ENCODE measurements at regions of chr1 and their contacts with region 1.

Region 1: DNA sequence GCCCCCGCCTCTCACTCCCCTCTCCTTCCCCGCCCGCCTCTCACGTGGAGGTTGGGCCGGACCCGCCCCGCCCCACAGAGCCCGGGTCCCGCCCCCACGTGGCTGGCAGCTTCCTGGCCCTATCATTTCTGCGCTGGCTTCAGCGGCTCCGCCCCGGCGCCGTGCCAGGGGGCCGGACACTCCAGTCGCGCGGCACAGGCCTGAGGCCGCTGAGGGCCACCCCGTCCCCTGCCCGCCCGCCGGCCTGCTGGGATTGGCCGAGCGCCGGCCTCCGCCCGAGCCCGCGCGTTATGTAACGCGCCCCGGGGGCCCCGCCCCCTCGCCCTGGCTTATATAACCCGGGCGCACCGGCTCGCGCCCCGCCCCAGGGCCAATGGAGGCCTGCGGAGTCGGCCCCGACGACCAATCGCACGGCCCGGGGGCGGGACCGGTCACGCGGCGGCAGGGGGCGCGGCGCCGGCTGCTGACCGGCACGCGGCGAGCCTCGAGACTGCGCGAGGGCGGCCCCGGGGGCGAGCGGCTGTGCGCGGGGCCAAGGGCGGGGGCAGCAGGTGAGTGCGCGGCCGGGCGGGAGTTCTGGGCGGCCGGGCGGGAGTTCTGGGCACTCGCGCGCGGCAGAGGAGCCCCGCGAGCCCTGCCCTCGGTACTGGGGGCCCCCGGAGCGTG is at the start of gene PER3:
- DNase-seq: peak; percentile 85
- H3K4me3 Mint-ChIP-seq: peak within 1 kb of the TSS; percentile 70
- H3K27ac Mint-ChIP-seq: no peak within 1 kb of the TSS
- H3K4me1 Mint-ChIP-seq: peaks cover 22% of the 10 kb centered on the region
- H3K27me3 Mint-ChIP-seq: no peaks in the 10 kb centered on the region
- total RNA-seq, gene PER3: 2.9 to 3.1 TPM

Region 2: GRCh38 chr1:6544831-6545230 is 1239.1 kb before region 1 on chr1:
- CTCF ChIA-PET with region 1: no interaction called
- intact Hi-C with region 1: no loop called
- DNase-seq: no peak
- H3K4me3 Mint-ChIP-seq: no peak overlapping the region
- H3K27ac Mint-ChIP-seq: peak overlapping the region; percentile 77
- H3K4me1 Mint-ChIP-seq: peaks cover 31% of the 10 kb centered on the region
- H3K27me3 Mint-ChIP-seq: no peaks in the 10 kb centered on the region

Region 3: DNA sequence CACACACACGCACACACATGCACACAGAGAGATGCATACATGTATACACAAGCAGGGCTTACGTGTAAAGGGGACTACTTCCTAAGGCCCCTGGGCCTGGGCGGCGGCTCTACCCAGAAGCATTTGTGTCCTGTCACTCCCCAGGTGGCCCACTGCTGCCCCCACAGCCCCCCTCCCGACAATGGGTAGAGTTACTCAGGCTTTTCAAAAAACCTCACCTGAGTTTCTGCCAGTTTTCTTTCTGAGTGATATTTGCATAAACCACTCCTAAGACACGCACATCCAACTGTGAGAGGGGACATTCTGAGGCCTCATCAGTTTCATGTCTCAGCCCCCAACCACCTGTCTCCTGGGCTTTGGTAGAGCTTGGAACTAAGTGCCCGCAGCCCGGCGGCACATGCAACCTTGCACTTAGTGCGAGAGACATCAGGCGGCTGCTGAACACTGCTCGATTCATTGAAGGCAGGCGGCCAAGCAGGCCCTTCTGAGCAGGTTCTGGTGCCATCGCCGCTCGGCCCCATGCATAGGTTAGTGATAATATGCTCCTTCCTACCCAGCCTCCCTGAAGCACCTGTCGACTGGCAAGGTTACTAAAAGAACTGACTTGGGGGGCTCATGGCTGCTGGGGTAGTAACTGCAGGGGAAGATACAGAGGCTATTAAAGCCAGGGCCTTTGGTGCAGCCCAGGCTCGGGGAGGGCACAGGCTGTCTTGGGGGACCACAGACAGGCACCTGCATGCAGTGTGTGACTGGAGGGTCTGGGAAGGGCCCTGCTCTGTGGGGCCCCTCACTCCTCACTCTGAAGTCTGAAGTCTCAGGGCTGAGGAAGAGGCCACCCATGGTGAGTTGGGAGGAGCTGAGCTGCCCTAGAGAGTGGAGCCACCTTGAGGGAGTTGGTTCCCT is 377.1 kb before region 1 on chr1:
- CTCF ChIA-PET with region 1: no interaction called
- intact Hi-C with region 1: no loop called
- DNase-seq: no peak
- H3K4me3 Mint-ChIP-seq: no peak overlapping the region
- H3K27ac Mint-ChIP-seq: no peak overlapping the region
- H3K4me1 Mint-ChIP-seq: no peaks in the 10 kb centered on the region
- H3K27me3 Mint-ChIP-seq: peaks cover 12% of the 10 kb centered on the region

Region 4: DNA sequence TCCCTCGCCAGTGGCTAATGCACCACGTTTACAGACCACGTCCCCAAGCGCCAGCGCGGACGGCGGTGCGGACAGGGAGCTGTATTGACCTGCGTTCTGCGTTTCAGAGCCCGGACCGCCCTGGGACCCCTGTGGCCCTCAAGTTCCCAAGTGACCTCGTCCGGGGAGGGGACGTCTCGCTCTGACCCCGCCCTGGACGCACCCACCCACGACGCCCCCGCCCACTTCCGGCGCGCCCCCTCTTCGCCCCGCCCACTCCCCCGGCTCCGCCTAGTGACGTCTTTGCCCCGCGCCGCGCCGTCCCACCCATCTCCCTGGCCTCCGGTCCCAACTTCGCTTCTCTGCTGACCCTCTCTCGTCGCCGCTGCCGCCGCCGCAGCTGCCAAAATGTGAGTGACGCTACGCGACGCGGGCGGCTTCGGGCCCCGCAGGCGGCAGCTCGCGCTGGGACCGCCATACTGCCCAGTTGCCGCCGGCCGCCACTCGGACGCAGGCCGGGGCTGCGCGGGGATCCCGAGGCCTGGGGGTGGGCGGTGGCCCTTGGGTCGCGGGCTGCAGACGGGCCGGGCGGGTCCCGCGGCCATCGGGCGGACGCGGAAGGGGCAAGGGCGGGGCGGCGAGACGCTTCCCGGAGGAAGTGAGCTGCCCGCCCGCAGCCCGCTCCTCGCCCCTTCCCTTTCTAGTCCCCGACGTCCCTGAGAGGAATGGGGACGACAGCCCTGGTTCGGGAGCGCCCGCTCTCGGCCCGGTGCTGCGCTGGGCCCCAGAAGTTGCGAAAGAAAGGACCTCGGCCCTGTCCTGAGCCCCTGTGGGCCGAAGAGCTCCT is 12.7 kb before region 1 on chr1 and contains the start of gene VAMP3:
- CTCF ChIA-PET with region 1: no interaction called
- intact Hi-C with region 1: loop called (anchors 1 kb)
- DNase-seq: peak; percentile 89
- H3K4me3 Mint-ChIP-seq: peak within 1 kb of the TSS; percentile 83
- H3K27ac Mint-ChIP-seq: peak within 1 kb of the TSS; percentile 60
- H3K4me1 Mint-ChIP-seq: peaks cover 34% of the 10 kb centered on the region
- H3K27me3 Mint-ChIP-seq: peaks cover 6% of the 10 kb centered on the region
- total RNA-seq, gene VAMP3: 16.7 to 19.4 TPM

Region 5: DNA sequence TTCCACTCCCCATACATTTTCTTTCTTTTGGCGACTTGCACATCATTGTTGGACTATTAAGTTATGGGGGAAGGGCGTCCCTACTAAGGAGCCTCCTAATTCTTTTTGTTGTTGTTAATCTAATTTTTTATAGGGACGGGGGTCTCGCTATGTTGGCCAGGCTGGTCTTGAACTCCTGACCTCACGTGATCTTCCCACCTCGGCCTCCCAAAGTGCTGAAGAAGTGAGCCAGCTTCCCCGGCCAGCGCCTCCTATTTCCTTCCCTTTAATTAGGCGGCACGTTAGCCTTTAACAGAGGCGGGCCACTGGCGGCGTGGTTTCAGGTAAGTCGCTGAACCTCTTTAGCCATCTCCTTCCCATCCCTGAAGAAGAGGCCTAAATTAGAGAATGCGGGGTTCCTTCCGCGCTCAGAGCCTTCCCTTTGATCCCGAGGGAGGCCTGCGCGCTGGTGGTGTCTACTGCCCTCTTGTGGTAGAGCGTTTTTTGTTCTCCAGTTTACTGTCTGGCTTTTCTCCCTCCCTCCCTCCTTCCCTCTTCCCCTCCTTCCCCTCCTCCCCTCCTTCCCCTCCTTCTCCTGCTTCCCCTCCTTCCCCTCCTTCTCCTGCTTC is 118.6 kb after region 1 on chr1:
- CTCF ChIA-PET with region 1: no interaction called
- intact Hi-C with region 1: loop called (anchors 10 kb)
- DNase-seq: peak; percentile 73
- H3K4me3 Mint-ChIP-seq: peak overlapping the region; percentile 62
- H3K27ac Mint-ChIP-seq: no peak overlapping the region
- H3K4me1 Mint-ChIP-seq: peaks cover 6% of the 10 kb centered on the region
- H3K27me3 Mint-ChIP-seq: no peaks in the 10 kb centered on the region

Region 6: DNA sequence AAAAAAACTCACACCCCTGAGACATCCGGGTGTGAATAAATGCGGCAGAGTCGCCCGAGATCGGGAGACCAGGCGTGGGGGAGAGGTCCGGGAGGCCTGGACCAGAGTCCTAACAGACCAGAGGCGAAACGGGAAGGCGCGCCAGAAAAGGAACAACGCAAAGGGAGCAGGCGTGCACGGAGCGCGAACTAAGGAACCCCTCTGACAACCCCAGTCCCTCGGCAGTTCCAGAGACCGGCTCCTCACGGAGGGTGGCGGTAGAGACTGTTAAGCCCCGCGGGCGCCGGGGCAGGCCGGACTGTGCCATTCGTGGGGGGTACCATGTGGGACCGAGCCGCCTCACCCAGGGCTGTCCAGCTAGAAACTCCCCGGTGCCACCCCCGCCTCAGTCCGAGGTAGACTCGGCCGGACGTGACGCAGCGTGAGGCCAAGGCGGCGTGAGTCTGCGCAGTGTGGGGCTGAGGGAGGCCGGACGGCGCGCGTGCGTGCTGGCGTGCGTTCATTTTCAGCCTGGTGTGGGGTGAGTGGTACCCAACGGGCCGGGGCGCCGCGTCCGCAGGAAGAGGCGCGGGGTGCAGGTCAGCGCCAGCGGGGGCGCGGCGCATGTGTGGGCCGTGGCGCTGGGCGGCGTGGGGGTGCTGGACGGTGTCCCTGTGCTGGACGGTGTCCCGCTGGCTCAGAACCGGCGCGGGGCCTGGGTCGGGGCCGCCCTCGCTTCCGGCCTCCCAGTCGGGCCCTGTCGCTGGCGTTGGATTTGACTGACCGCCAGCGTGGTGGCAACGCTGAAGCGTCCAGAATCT is 177.5 kb after region 1 on chr1 and contains the start of gene PARK7:
- CTCF ChIA-PET with region 1: no interaction called
- intact Hi-C with region 1: loop called (anchors 5 kb)
- DNase-seq: peak; percentile 100
- H3K4me3 Mint-ChIP-seq: peak within 1 kb of the TSS; percentile 99
- H3K27ac Mint-ChIP-seq: peak within 1 kb of the TSS; percentile 98
- H3K4me1 Mint-ChIP-seq: peaks cover 53% of the 10 kb centered on the region
- H3K27me3 Mint-ChIP-seq: no peaks in the 10 kb centered on the region
- total RNA-seq, gene PARK7: 373 to 397 TPM

Region 7: DNA sequence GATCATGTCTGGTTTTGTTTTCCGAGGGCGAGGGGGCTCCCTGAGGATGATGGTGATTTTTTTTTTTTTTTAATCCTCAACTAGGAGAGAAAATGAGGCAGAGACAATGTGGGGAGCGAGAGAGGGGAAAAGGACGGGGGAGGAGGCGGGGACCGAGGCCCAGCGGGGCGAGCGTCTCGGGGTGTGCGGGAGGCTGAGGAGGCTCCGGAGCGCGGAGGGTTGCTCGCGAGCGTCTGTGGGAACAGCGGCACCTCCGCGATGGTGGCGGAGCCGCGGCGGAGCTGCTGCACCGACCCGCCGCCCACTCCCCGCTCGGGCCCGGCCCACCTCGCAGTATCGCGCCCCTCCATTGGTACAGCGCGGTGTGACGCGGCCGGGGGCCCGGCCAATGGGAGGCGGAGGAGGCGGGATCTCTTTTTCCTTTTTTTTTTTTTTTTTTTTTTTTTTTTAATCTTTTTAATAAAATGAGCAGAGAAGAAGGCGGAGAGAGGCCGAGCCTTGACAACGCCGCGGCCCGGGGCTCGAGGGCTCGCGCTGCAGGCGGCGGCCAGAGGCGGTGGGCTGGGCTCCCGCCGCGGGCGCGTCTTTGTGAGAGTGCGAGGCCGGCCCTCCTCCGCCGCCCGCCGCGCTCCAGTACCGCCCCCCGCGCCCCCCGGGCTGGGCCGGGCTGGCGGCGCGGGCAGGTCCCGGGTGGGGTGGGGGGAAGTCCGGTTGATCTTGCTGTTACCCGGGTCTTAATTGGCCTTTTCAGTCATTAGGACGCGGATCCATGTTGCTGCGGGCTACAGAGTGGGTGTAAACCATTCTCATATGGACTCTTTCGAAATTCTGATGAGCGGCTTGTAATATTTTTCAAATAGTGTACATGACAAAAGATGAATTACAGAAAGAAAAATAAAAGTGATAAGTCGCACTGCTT is 1033.7 kb after region 1 on chr1 and contains the start of gene RERE:
- CTCF ChIA-PET with region 1: no interaction called
- intact Hi-C with region 1: loop called (anchors 10 kb)
- DNase-seq: peak; percentile 94
- H3K4me3 Mint-ChIP-seq: peak within 1 kb of the TSS; percentile 86
- H3K27ac Mint-ChIP-seq: peak within 1 kb of the TSS; percentile 93
- H3K4me1 Mint-ChIP-seq: peaks cover 45% of the 10 kb centered on the region
- H3K27me3 Mint-ChIP-seq: no peaks in the 10 kb centered on the region
- total RNA-seq, gene RERE: 46.4 to 47.6 TPM